Activated B cell treated with CpG ODN at 0.5 μM for 24 hours (primary cell): ENCODE measurements at regions of chr7 and their contacts with region 1.

Region 1: DNA sequence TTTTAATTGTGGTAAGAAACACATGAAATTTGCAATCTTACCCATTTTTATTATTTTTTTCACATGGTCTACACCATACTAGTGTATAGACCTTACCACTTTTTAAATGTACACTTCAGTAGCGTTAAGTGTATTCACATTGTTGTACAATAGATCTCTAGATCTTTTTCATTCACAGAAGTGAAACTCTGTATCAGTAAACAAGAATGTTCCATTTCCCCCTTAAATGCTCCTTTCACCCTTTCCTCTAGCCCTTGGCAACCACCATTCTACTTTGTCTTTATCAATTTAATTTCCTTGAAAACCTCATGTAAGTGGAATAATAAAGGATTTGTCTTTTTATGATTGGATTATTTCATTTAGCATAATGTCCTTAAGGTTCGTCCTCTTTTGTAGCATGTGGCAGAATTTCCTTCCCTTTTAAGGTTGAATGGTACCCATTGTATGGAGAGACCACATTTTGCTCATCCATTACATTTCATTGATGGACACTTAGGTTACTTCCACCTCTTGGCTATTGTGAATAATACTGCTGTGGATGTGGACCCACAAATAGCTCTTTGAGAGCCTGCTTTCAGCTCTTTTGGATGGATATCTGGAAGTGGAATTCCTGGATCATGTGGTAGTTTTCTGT is 45.7 kb downstream of the SNX10 start:
- DNase-seq: no peak
- ATAC-seq: peak; percentile 68
- H3K4me3 Mint-ChIP-seq: peak overlapping the region; percentile 60
- H3K27ac Mint-ChIP-seq: peak overlapping the region; percentile 96
- H3K4me1 Mint-ChIP-seq: peaks cover 83% of the 10 kb centered on the region
- H3K27me3 Mint-ChIP-seq: no peaks in the 10 kb centered on the region
- CTCF ChIP-seq: no peak

Region 2: DNA sequence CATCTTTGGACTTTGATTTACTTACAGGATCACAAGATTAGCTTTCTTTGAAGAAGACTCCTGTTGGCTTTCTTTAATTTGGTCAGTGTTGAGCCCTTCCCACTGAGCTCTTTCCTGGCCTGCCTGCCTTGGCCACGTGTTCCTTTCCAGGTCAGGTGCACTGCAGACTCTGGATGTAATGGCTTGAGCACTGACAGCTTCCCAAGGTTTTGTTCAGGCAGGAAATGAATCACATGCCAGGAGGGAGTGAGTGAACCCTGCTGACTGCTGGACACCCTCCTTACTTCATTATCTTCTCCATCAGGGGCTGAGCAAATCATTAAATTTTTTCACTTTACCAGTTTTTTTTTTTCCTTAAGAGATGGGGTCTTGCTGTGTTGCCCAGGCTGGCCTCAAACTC is 15.9 kb before region 1 on chr7:
- CTCF ChIA-PET with region 1: interaction called, 5 read pairs
- POLR2A ChIA-PET with region 1: interaction called, 4 read pairs
- intact Hi-C with region 1: loop called (anchors 2 kb)
- DNase-seq: no peak
- ATAC-seq: no peak
- H3K4me3 Mint-ChIP-seq: no peak overlapping the region
- H3K27ac Mint-ChIP-seq: peak overlapping the region; percentile 50
- H3K4me1 Mint-ChIP-seq: peaks cover 50% of the 10 kb centered on the region
- H3K27me3 Mint-ChIP-seq: no peaks in the 10 kb centered on the region
- CTCF ChIP-seq: no peak

Region 3: DNA sequence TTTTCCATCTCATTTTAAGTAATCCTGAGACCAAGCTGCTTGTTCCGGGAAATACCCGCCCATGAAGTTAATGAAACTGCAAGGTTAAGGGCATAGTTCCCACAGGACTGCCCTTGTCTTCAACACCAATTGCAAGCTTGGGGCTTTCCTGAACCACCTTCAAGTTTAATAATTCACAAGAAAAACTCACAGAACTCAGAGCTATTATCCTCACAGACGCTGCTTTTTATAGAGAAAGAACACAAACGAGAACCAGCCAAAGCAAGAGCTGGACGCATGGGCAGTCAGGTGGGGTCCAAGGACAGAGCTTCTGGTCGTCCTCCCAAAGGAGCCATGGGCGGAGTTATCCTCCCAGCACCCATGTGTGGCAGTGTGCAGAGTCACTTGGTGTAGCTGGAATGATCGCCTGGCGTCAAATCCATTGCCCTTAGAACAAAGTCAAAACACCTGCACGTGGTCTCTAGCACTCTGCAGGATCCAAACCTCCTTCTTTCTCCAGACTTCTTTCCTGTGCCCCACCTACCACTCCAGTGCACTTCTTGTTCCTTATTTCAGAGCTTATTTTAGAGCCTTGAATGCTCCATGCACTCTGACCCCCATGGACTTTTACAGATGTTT is 11.0 kb after region 1 on chr7:
- CTCF ChIA-PET with region 1: no interaction called
- POLR2A ChIA-PET with region 1: interaction called, 9 read pairs
- intact Hi-C with region 1: loop called (anchors 2 kb)
- DNase-seq: no peak
- ATAC-seq: peak; percentile 42
- H3K4me3 Mint-ChIP-seq: no peak overlapping the region
- H3K27ac Mint-ChIP-seq: peak overlapping the region; percentile 30
- H3K4me1 Mint-ChIP-seq: peaks cover 40% of the 10 kb centered on the region
- H3K27me3 Mint-ChIP-seq: no peaks in the 10 kb centered on the region
- CTCF ChIP-seq: no peak

Region 4: GRCh38 chr7:26356929-26357798 is 19.8 kb after region 1 on chr7:
- CTCF ChIA-PET with region 1: no interaction called
- POLR2A ChIA-PET with region 1: interaction called, 7 read pairs
- intact Hi-C with region 1: loop called (anchors 2 kb)
- DNase-seq: no peak
- ATAC-seq: no peak
- H3K4me3 Mint-ChIP-seq: no peak overlapping the region
- H3K27ac Mint-ChIP-seq: peak overlapping the region; percentile 46
- H3K4me1 Mint-ChIP-seq: peaks cover 48% of the 10 kb centered on the region
- H3K27me3 Mint-ChIP-seq: no peaks in the 10 kb centered on the region
- CTCF ChIP-seq: no peak

Region 5: GRCh38 chr7:26451997-26452396 is 114.6 kb after region 1 on chr7:
- CTCF ChIA-PET with region 1: no interaction called
- POLR2A ChIA-PET with region 1: no interaction called
- intact Hi-C with region 1: no loop called
- DNase-seq: no peak
- ATAC-seq: no peak
- H3K4me3 Mint-ChIP-seq: no peak overlapping the region
- H3K27ac Mint-ChIP-seq: no peak overlapping the region
- H3K4me1 Mint-ChIP-seq: no peaks in the 10 kb centered on the region
- H3K27me3 Mint-ChIP-seq: no peaks in the 10 kb centered on the region
- CTCF ChIP-seq: no peak